ENCODE measurements at regions of chr4 and their contacts with region 1.

Region 1: DNA sequence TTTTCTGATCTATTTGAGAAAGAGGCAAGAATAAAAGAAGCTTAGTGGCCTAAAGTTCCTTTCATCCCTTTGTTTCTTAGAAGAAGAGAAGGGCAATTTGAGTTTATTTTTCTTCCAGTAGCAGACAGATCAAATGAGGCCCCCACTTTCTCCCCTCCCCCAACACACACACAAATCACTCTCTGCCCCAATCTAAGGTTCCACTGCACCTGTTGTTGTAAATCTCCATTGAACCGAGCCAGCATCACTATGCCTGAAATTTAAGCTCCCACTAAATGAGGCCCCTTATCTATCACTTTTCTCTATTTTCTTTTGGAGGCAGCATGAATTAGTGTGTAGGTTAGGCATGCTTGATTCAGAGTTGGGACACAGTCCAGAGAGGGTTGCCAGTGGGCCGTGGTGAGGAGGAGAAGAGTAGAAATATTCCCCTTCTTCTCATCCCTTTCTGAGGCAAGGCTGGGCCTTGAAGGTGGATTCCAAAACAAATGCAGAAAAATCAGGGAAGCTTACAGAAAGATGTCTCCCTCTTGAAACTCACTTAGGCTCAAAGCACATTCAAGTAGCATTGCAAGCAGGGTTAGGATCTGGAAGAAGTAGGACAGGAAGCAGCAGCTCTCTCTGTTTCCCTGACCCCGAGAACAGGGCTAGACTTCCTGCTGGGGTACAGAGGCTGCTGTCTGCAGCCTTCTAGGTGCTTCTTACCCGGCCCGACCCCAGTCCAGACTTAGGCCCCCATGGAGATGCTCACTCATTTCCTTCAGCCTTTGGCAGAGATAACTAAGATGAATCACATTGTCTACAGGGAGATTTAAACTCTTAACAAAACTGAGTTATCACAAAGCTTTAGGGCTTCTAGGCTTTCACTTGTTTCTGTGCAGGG is 70.7 kb downstream of the RASL11B start:
- DNase-seq: no peak
- ATAC-seq: no peak
- H3K4me3 ChIP-seq: no peak overlapping the region
- H3K4me3 Mint-ChIP-seq: no peak overlapping the region
- H3K27ac ChIP-seq: no peak overlapping the region
- H3K27ac Mint-ChIP-seq: no peak overlapping the region
- H3K4me1 ChIP-seq: peaks cover 3% of the 10 kb centered on the region
- H3K4me1 Mint-ChIP-seq: peaks cover 8% of the 10 kb centered on the region
- H3K27me3 ChIP-seq: no peaks in the 10 kb centered on the region
- H3K27me3 Mint-ChIP-seq: no peaks in the 10 kb centered on the region
- CTCF ChIP-seq: no peak

Region 2: DNA sequence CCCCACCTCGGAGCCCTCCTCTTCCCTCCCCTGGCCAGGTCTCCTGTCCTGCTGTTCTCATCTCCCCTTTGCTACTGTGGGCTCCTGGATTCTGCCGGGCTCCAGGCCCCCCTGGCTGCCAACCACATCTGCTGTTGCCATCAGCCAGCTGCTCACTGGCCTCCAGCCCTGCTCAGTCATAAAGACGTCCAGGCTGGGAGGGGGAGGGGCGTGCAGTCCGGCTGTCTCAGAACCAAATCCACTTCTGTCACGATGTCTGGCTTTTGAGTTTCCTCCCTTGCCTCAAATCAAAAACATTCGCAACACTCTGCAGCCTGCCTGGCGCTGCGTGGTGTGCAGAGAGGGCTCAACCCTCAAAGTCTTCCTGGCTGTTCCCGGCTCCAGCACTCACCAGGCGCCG is 63.6 kb before region 1 on chr4:
- CTCF ChIA-PET with region 1: no interaction called
- POLR2A ChIA-PET with region 1: no interaction called
- intact Hi-C with region 1: no loop called
- DNase-seq: no peak
- ATAC-seq: no peak
- H3K4me3 ChIP-seq: no peak overlapping the region
- H3K4me3 Mint-ChIP-seq: no peak overlapping the region
- H3K27ac ChIP-seq: no peak overlapping the region
- H3K27ac Mint-ChIP-seq: no peak overlapping the region
- H3K4me1 ChIP-seq: no peaks in the 10 kb centered on the region
- H3K4me1 Mint-ChIP-seq: no peaks in the 10 kb centered on the region
- H3K27me3 ChIP-seq: no peaks in the 10 kb centered on the region
- H3K27me3 Mint-ChIP-seq: peaks cover 2% of the 10 kb centered on the region
- CTCF ChIP-seq: no peak

Region 3: GRCh38 chr4:52946855-52947254 is 14.0 kb after region 1 on chr4:
- CTCF ChIA-PET with region 1: no interaction called
- POLR2A ChIA-PET with region 1: no interaction called
- intact Hi-C with region 1: no loop called
- DNase-seq: no peak
- ATAC-seq: no peak
- H3K4me3 ChIP-seq: no peak overlapping the region
- H3K4me3 Mint-ChIP-seq: no peak overlapping the region
- H3K27ac ChIP-seq: no peak overlapping the region
- H3K27ac Mint-ChIP-seq: no peak overlapping the region
- H3K4me1 ChIP-seq: no peaks in the 10 kb centered on the region
- H3K4me1 Mint-ChIP-seq: no peaks in the 10 kb centered on the region
- H3K27me3 ChIP-seq: no peaks in the 10 kb centered on the region
- H3K27me3 Mint-ChIP-seq: no peaks in the 10 kb centered on the region
- CTCF ChIP-seq: no peak

Region 4: DNA sequence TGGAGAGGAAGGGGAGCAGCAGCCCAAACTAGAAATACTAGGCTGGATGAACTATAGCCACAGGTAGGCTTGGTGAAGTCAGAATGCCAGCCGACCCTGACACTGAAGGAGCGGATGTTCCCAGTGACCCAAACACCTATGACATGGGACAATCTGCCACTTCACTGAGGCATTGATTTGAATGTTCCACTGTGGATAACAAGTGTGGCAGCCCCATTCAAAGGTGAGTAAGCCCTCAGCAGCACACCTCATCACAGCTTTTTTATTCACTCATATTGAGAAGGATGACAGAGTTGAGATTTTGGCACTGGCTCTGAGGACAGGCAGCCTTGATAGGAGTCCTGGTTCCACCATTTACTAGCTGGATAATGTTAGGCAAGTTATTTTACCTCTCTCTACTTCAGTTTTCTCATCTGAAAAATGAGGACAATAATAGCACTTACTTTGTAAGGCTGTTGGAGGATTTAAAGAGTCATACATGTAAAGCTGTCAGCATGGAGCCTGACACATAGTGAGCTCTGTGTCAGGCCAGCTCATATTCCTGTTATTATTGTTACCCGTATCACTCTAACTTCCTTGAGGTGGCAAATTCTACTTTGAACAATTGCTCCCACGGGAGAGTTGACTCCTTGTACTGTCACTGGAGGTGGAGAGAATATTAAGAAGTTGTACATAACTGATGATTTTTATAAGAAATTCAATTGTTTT is 43.8 kb after region 1 on chr4:
- CTCF ChIA-PET with region 1: no interaction called
- POLR2A ChIA-PET with region 1: no interaction called
- intact Hi-C with region 1: loop called in 1 of 2 experiments (anchors 2 kb)
- DNase-seq: no peak
- ATAC-seq: no peak
- H3K4me3 ChIP-seq: no peak overlapping the region
- H3K4me3 Mint-ChIP-seq: no peak overlapping the region
- H3K27ac ChIP-seq: no peak overlapping the region
- H3K27ac Mint-ChIP-seq: no peak overlapping the region
- H3K4me1 ChIP-seq: no peaks in the 10 kb centered on the region
- H3K4me1 Mint-ChIP-seq: no peaks in the 10 kb centered on the region
- H3K27me3 ChIP-seq: no peaks in the 10 kb centered on the region
- H3K27me3 Mint-ChIP-seq: no peaks in the 10 kb centered on the region
- CTCF ChIP-seq: no peak

Measured in CD4-positive, alpha-beta T cell (primary cell).